CD4-positive, alpha-beta memory T cell (primary cell): ENCODE measurements at regions of chr1 and their contacts with region 1.

Region 1: GRCh38 chr1:116817582-116818064 is 63.4 kb downstream of the CD2 start:
- DNase-seq: peak; percentile 67 to 77 (median 71)
- H3K4me3 ChIP-seq: no peak overlapping the region
- H3K4me3 Mint-ChIP-seq: peak overlapping the region in 7 of 8 donors; percentile 39 to 76 (median 60)
- H3K27ac ChIP-seq: no peak overlapping the region
- H3K27ac Mint-ChIP-seq: peak overlapping the region; percentile 79 to 96 (median 88)
- H3K4me1 ChIP-seq: peaks cover 36% of the 10 kb centered on the region
- H3K4me1 Mint-ChIP-seq: peaks cover 22 to 40% (median 29%) of the 10 kb centered on the region in 4 donors
- H3K27me3 ChIP-seq: no peaks in the 10 kb centered on the region
- H3K27me3 Mint-ChIP-seq: no peaks in the 10 kb centered on the region

Region 2: GRCh38 chr1:116448813-116449281 is 368.8 kb before region 1 on chr1:
- CTCF ChIA-PET with region 1: no interaction called
- POLR2A ChIA-PET with region 1: no interaction called
- intact Hi-C with region 1: no loop called
- DNase-seq: no peak
- H3K4me3 ChIP-seq: no peak overlapping the region
- H3K4me3 Mint-ChIP-seq: no peak overlapping the region
- H3K27ac ChIP-seq: no peak overlapping the region
- H3K27ac Mint-ChIP-seq: no peak overlapping the region
- H3K4me1 ChIP-seq: no peaks in the 10 kb centered on the region
- H3K4me1 Mint-ChIP-seq: no peaks in the 10 kb centered on the region
- H3K27me3 ChIP-seq: no peaks in the 10 kb centered on the region
- H3K27me3 Mint-ChIP-seq: peaks cover 3 to 4% of the 10 kb centered on the region in 2 donors

Region 3: DNA sequence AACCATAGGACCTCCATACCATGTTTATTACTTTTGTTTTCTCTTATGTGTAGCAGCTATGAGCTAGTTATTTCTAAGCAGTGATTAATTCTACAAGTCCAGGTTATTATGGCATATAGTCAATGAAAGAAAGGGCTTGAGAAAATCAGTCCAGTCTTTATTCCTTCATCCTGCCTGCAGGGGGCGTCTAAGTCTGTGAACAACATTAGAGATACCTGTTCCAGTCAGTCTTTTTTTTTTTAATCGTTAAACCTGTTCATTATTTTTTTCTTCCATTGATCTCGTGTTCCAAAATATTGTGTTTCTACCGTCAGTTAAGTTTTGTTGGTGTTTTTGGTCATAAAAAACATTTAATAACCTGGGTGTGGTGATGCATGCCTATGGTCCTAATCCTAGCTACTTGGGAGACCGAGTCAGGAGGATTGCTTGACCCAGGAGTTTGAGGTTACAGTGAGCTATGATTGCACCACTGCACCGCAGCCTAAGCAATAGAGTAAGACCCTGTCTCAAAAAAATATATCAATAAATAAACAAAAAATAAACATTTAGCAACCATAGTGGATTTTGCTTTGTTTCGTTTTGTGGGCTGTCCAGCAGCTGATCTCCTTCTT is 92.8 kb before region 1 on chr1:
- CTCF ChIA-PET with region 1: interaction called, 33 read pairs
- POLR2A ChIA-PET with region 1: interaction called, 6 read pairs
- intact Hi-C with region 1: loop called (anchors 1 kb)
- DNase-seq: peak; percentile 67 to 81 (median 73)
- H3K4me3 ChIP-seq: no peak overlapping the region
- H3K4me3 Mint-ChIP-seq: no peak overlapping the region
- H3K27ac ChIP-seq: no peak overlapping the region
- H3K27ac Mint-ChIP-seq: peak overlapping the region in 3 of 7 donors; percentile 1 to 47 (median 39)
- H3K4me1 ChIP-seq: peaks cover 13% of the 10 kb centered on the region
- H3K4me1 Mint-ChIP-seq: peaks cover 6 to 27% (median 12%) of the 10 kb centered on the region in 4 donors
- H3K27me3 ChIP-seq: no peaks in the 10 kb centered on the region
- H3K27me3 Mint-ChIP-seq: no peaks in the 10 kb centered on the region

Region 4: GRCh38 chr1:116754198-116754977 is 63.2 kb before region 1 on chr1 and contains the start of gene CD2:
- CTCF ChIA-PET with region 1: interaction called, 34 read pairs
- POLR2A ChIA-PET with region 1: interaction called, 513 read pairs
- intact Hi-C with region 1: loop called (anchors 1 kb)
- DNase-seq: peak; percentile 66 to 74 (median 71)
- H3K4me3 ChIP-seq: peak within 1 kb of the TSS; percentile 53 to 72
- H3K4me3 Mint-ChIP-seq: peak within 1 kb of the TSS; percentile 96 to 100 (median 98)
- H3K27ac ChIP-seq: peak within 1 kb of the TSS; percentile 88
- H3K27ac Mint-ChIP-seq: peak within 1 kb of the TSS; percentile 96 to 100 (median 99)
- H3K4me1 ChIP-seq: peaks cover 34% of the 10 kb centered on the region
- H3K4me1 Mint-ChIP-seq: peaks cover 25 to 64% (median 33%) of the 10 kb centered on the region in 4 donors
- H3K27me3 ChIP-seq: no peaks in the 10 kb centered on the region
- H3K27me3 Mint-ChIP-seq: no peaks in the 10 kb centered on the region
- total RNA-seq, gene CD2: 305 to 316 TPM

Region 5: GRCh38 chr1:116763787-116764465 is 53.7 kb before region 1 on chr1:
- CTCF ChIA-PET with region 1: interaction called, 219 read pairs
- POLR2A ChIA-PET with region 1: interaction called, 513 read pairs
- intact Hi-C with region 1: loop called (anchors 1 kb)
- DNase-seq: peak in 3 of 5 donors; percentile 39 to 80 (median 43)
- H3K4me3 ChIP-seq: peak overlapping the region; percentile 10 to 27
- H3K4me3 Mint-ChIP-seq: peak overlapping the region; percentile 76 to 94 (median 84)
- H3K27ac ChIP-seq: peak overlapping the region; percentile 88
- H3K27ac Mint-ChIP-seq: peak overlapping the region; percentile 97 to 99 (median 98)
- H3K4me1 ChIP-seq: peaks cover 97% of the 10 kb centered on the region
- H3K4me1 Mint-ChIP-seq: peaks cover 79 to 100% (median 88%) of the 10 kb centered on the region in 4 donors
- H3K27me3 ChIP-seq: no peaks in the 10 kb centered on the region
- H3K27me3 Mint-ChIP-seq: no peaks in the 10 kb centered on the region

Region 6: DNA sequence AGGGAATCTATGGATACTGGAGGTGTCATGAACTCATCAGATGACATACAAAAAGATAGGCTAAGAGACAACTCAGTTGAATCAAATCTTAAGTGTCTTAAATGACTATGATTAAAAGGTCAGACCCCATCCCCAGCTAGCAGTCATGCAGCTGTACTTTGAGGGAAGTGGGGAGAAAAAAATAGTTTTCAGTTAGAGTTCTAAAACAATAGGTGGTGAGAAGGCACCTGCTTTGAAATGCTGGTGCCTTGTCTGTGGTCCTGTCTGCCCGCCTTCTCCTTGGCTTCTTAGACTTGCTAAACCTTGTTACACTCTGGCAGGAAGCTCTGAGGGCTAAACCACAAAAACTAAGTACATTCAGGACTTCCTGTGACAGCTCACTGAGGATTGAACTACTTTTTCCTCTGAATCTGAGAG is 48.1 kb before region 1 on chr1:
- CTCF ChIA-PET with region 1: interaction called, 219 read pairs
- POLR2A ChIA-PET with region 1: interaction called, 513 read pairs
- intact Hi-C with region 1: loop called (anchors 1 kb)
- DNase-seq: peak; percentile 85 to 94 (median 89)
- H3K4me3 ChIP-seq: peak overlapping the region in 1 of 2 donors; percentile 24
- H3K4me3 Mint-ChIP-seq: peak overlapping the region; percentile 29 to 94 (median 74)
- H3K27ac ChIP-seq: peak overlapping the region; percentile 88
- H3K27ac Mint-ChIP-seq: peak overlapping the region; percentile 97 to 99 (median 98)
- H3K4me1 ChIP-seq: peaks cover 87% of the 10 kb centered on the region
- H3K4me1 Mint-ChIP-seq: peaks cover 75 to 91% (median 82%) of the 10 kb centered on the region in 4 donors
- H3K27me3 ChIP-seq: no peaks in the 10 kb centered on the region
- H3K27me3 Mint-ChIP-seq: no peaks in the 10 kb centered on the region

Region 7: GRCh38 chr1:116794804-116795481 is 22.7 kb before region 1 on chr1:
- CTCF ChIA-PET with region 1: interaction called, 24 read pairs
- POLR2A ChIA-PET with region 1: interaction called, 123 read pairs
- intact Hi-C with region 1: no loop called
- DNase-seq: no peak
- H3K4me3 ChIP-seq: no peak overlapping the region
- H3K4me3 Mint-ChIP-seq: no peak overlapping the region
- H3K27ac ChIP-seq: no peak overlapping the region
- H3K27ac Mint-ChIP-seq: peak overlapping the region in 2 of 7 donors; percentile 3 to 71
- H3K4me1 ChIP-seq: peaks cover 57% of the 10 kb centered on the region
- H3K4me1 Mint-ChIP-seq: peaks cover 36 to 74% (median 58%) of the 10 kb centered on the region in 4 donors
- H3K27me3 ChIP-seq: no peaks in the 10 kb centered on the region
- H3K27me3 Mint-ChIP-seq: no peaks in the 10 kb centered on the region

Region 8: GRCh38 chr1:116806245-116806644 is 11.4 kb before region 1 on chr1:
- CTCF ChIA-PET with region 1: interaction called, 24 read pairs
- POLR2A ChIA-PET with region 1: interaction called, 123 read pairs
- intact Hi-C with region 1: loop called (anchors 1 kb)
- DNase-seq: peak in 4 of 5 donors; percentile 57 to 79 (median 58)
- H3K4me3 ChIP-seq: peak overlapping the region in 1 of 2 donors; percentile 29
- H3K4me3 Mint-ChIP-seq: peak overlapping the region; percentile 67 to 96 (median 85)
- H3K27ac ChIP-seq: peak overlapping the region; percentile 80
- H3K27ac Mint-ChIP-seq: peak overlapping the region; percentile 89 to 99 (median 98)
- H3K4me1 ChIP-seq: peaks cover 97% of the 10 kb centered on the region
- H3K4me1 Mint-ChIP-seq: peaks cover 78 to 97% (median 84%) of the 10 kb centered on the region in 4 donors
- H3K27me3 ChIP-seq: no peaks in the 10 kb centered on the region
- H3K27me3 Mint-ChIP-seq: no peaks in the 10 kb centered on the region

Region 9: DNA sequence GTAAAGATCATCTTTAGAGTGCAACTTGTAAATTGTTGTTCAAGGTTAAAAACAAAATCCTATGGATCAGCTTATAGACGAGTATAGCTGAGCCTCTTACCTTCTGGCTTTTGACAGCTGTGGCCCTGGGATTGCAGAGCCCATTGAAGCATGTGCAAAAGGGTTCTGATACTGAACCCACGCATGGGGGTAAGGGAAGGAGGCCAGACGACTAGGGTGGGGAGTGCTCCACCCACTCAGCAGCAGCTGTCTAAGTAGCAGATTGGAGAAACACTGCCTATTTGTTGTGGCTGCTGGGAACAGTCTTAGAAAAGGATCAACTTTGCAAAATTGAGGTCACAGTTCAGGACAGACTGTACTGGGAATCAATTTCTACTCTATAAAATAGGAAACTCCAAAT is 200.0 kb after region 1 on chr1:
- CTCF ChIA-PET with region 1: no interaction called
- POLR2A ChIA-PET with region 1: no interaction called
- intact Hi-C with region 1: no loop called
- DNase-seq: no peak
- H3K4me3 ChIP-seq: no peak overlapping the region
- H3K4me3 Mint-ChIP-seq: no peak overlapping the region
- H3K27ac ChIP-seq: no peak overlapping the region
- H3K27ac Mint-ChIP-seq: no peak overlapping the region
- H3K4me1 ChIP-seq: no peaks in the 10 kb centered on the region
- H3K4me1 Mint-ChIP-seq: peaks cover 0 to 6% (median 2%) of the 10 kb centered on the region in 4 donors
- H3K27me3 ChIP-seq: no peaks in the 10 kb centered on the region
- H3K27me3 Mint-ChIP-seq: no peaks in the 10 kb centered on the region